ENCODE measurements at regions of chr1 and their contacts with region 1.

Region 1: DNA sequence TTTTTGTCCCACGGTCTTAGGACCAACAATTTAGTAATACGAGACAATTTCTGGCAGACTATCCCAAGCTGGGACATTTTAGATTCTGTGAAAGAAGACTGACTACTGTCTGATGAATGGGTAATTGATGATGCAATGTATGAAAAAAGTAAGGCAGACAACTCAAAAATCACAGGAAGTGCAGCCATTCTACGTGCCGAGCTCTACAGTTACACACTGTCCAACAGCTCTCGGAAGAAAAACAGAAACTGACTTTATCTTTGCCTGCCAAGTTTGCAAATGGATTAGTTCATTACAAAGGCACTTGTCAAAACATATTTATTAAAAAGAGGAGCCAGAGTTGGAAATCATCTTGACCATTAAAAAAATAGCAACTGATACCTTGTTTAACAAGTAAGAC is 31.3 kb downstream of the ZBTB8B start:
- DNase-seq: no peak
- ATAC-seq: no peak
- H3K4me3 ChIP-seq: no peak overlapping the region
- H3K4me3 Mint-ChIP-seq: no peak overlapping the region
- H3K27ac ChIP-seq: no peak overlapping the region
- H3K27ac Mint-ChIP-seq: no peak overlapping the region
- H3K4me1 ChIP-seq: peaks cover 3% of the 10 kb centered on the region
- H3K4me1 Mint-ChIP-seq: peaks cover 7% of the 10 kb centered on the region
- H3K27me3 ChIP-seq: peaks cover 2 to 6% of the 10 kb centered on the region in 2 experiments
- H3K27me3 Mint-ChIP-seq: peaks cover 39% of the 10 kb centered on the region
- CTCF ChIP-seq: no peak

Region 2: DNA sequence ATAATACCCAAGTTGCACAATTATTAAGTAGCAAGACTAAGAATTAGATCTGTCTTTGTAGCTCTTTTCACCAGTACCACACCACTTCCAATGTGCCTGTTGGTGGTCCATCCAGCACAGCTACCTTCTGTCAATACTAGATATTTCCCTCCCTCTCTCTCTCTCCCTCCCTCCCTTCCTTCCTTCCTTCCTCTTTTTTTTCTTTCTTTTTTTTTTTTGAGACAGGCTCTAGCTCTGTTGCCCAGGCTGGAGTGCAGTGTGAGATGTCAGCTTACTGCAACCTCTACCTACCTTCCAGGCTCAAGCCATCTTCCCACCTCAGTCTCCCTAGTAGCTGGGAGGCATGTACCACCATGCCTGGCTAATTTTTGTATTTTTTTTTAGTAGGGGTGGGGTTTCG is 367.2 kb before region 1 on chr1:
- CTCF ChIA-PET with region 1: no interaction called
- POLR2A ChIA-PET with region 1: no interaction called
- intact Hi-C with region 1: no loop called
- DNase-seq: no peak
- ATAC-seq: no peak
- H3K4me3 ChIP-seq: no peak overlapping the region
- H3K4me3 Mint-ChIP-seq: no peak overlapping the region
- H3K27ac ChIP-seq: no peak overlapping the region
- H3K27ac Mint-ChIP-seq: no peak overlapping the region
- H3K4me1 ChIP-seq: peaks cover 17% of the 10 kb centered on the region
- H3K4me1 Mint-ChIP-seq: peaks cover 51% of the 10 kb centered on the region
- H3K27me3 ChIP-seq: no peaks in the 10 kb centered on the region
- H3K27me3 Mint-ChIP-seq: no peaks in the 10 kb centered on the region
- CTCF ChIP-seq: no peak

Region 3: DNA sequence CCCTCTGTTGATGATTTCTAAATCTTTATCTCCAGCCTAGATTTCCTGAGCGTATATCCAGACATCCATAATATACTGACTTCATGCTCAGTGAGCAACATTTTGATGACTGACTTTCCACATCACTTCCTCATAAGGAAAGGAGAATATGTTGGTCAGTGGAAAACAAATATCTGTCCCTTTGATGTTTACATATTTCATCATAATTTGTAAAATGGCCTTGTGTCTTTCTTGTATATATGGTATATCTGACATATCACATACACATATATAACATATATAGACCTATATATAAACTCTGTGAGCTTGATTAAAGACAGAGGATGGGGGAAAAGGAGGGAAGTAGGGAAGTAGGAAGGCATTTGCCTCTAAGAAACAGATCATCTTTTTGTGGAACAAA is 61.7 kb after region 1 on chr1:
- CTCF ChIA-PET with region 1: no interaction called
- POLR2A ChIA-PET with region 1: no interaction called
- intact Hi-C with region 1: no loop called
- DNase-seq: no peak
- ATAC-seq: no peak
- H3K4me3 ChIP-seq: no peak overlapping the region
- H3K4me3 Mint-ChIP-seq: no peak overlapping the region
- H3K27ac ChIP-seq: no peak overlapping the region
- H3K27ac Mint-ChIP-seq: no peak overlapping the region
- H3K4me1 ChIP-seq: no peaks in the 10 kb centered on the region
- H3K4me1 Mint-ChIP-seq: no peaks in the 10 kb centered on the region
- H3K27me3 ChIP-seq: no peaks in the 10 kb centered on the region
- H3K27me3 Mint-ChIP-seq: no peaks in the 10 kb centered on the region
- CTCF ChIP-seq: no peak

Region 4: DNA sequence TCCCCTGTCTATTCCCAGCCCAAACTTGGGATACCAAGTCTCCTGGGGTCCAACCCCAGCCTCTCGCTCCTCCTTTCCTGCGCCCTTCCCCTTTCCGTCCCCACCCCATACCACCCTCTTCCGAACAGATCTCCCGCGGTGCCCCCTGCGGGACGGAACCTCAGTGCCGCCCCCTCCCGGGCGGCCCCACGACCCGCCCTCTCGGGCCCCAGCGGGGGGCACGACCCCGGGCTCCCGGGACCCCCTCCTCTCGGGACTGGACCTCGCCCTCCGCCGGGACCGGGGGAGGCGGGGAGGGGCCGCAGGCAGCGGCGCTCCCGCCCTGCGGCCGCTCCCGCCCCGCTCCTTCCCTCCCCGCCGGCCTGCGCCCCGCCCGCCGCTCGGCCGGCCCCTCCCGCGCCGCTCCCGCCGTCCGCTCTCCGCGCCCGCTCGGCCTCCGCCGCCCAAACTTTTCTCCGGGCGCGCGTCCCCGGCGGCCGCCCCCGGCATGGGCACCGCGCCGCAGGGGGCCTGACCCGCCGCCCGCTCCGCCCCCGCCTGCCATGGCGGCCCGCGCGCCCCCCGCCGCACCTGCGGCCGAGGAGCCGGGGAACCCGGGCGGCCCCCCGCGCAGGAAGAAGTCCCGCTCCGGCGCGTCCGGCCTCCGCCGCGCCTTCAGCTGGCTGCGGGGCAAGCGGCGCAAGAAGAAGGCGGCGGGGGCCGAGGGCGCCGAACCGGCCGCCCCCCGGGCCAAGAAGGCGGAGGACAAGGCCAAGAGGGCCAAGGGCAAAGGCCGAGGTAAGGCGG is 245.5 kb after region 1 on chr1:
- CTCF ChIA-PET with region 1: no interaction called
- POLR2A ChIA-PET with region 1: no interaction called
- intact Hi-C with region 1: no loop called
- DNase-seq: peak in 2 of 9 experiments; percentile 22 to 28
- ATAC-seq: peak; percentile 44
- H3K4me3 ChIP-seq: peak overlapping the region in 1 of 2 experiments; percentile 20
- H3K4me3 Mint-ChIP-seq: peak overlapping the region; percentile 71
- H3K27ac ChIP-seq: no peak overlapping the region
- H3K27ac Mint-ChIP-seq: no peak overlapping the region
- H3K4me1 ChIP-seq: peaks cover 3% of the 10 kb centered on the region
- H3K4me1 Mint-ChIP-seq: peaks cover 6% of the 10 kb centered on the region
- H3K27me3 ChIP-seq: peaks cover 2 to 6% of the 10 kb centered on the region in 2 experiments
- H3K27me3 Mint-ChIP-seq: peaks cover 9% of the 10 kb centered on the region
- CTCF ChIP-seq: no peak

Region 5: GRCh38 chr1:33319949-33320605 is 824.0 kb after region 1 on chr1:
- CTCF ChIA-PET with region 1: no interaction called
- POLR2A ChIA-PET with region 1: no interaction called
- intact Hi-C with region 1: loop called in 1 of 2 experiments (anchors 10 kb)
- DNase-seq: no peak
- ATAC-seq: no peak
- H3K4me3 ChIP-seq: no peak overlapping the region
- H3K4me3 Mint-ChIP-seq: no peak overlapping the region
- H3K27ac ChIP-seq: no peak overlapping the region
- H3K27ac Mint-ChIP-seq: no peak overlapping the region
- H3K4me1 ChIP-seq: no peaks in the 10 kb centered on the region
- H3K4me1 Mint-ChIP-seq: peaks cover 5% of the 10 kb centered on the region
- H3K27me3 ChIP-seq: no peaks in the 10 kb centered on the region
- H3K27me3 Mint-ChIP-seq: no peaks in the 10 kb centered on the region
- CTCF ChIP-seq: no peak